CD14-positive monocyte (primary cell): ENCODE measurements at regions of chr11 and their contacts with region 1.

Region 1: DNA sequence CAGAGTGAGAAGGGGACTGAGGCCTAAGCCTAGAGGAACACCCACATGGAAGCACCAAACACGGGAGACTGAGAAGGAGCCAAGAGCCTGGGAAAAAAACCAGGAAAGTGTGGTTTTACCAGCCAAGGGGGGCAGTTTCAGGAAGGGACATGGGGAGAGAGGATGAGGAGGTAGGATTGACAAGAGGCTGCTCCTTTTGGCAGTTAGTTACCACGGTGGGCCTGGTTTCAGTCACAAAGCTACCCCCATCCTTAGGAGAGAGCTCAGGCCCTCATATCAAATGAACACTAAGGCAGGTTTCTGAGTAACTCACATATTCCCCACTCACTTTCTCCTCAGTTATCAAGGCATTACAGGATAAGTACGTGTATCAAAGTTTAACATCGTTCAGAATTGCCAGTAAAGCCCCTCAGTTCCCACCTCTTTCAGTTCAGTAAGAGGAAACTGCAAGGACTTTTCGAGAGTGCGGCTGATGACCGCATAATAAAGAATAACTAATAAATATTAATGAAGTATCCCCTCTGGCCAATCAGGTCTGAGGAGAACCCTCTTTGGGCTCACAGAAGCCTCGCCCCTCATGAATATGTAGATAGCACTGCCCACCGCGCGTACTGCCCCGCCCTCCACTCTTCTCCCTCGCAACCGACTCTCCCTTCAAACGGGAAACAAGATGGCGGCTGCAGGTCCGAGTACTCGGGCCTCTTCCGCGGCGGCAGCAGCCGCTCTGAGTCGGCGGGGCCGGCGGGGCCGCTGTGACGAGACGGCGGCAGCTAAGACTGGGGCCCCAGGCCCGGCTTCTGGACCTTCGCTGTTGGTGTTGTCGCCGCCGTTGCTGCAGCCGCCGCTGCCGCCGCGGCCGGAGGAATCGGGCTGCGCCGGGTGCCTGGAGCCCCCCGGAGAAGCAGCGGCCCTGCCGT is at the start of gene RNF169:
- DNase-seq: peak; percentile 94 to 98 (median 96)
- H3K4me3 ChIP-seq: peak within 1 kb of the TSS; percentile 50 to 81 (median 63)
- H3K4me3 Mint-ChIP-seq: peak within 1 kb of the TSS; percentile 86 to 96
- H3K27ac ChIP-seq: peak within 1 kb of the TSS; percentile 64 to 89
- H3K27ac Mint-ChIP-seq: peak within 1 kb of the TSS; percentile 82 to 93 (median 87)
- H3K4me1 ChIP-seq: peaks cover 26 to 36% of the 10 kb centered on the region in 2 donors
- H3K4me1 Mint-ChIP-seq: peaks cover 36% of the 10 kb centered on the region
- H3K27me3 ChIP-seq: no peaks in the 10 kb centered on the region
- H3K27me3 Mint-ChIP-seq: peaks cover 2 to 5% (median 2%) of the 10 kb centered on the region in 3 donors
- CTCF ChIP-seq: no peak
- polyA plus RNA-seq, gene RNF169: 1.4 to 16.2 (median 2.0) TPM

Region 2: GRCh38 chr11:74702383-74703007 is 46.0 kb before region 1 on chr11:
- intact Hi-C with region 1: no loop called
- DNase-seq: peak; percentile 34 to 47 (median 39)
- H3K4me3 ChIP-seq: no peak overlapping the region
- H3K4me3 Mint-ChIP-seq: no peak overlapping the region
- H3K27ac ChIP-seq: no peak overlapping the region
- H3K27ac Mint-ChIP-seq: no peak overlapping the region
- H3K4me1 ChIP-seq: no peaks in the 10 kb centered on the region
- H3K4me1 Mint-ChIP-seq: peaks cover 2% of the 10 kb centered on the region
- H3K27me3 ChIP-seq: no peaks in the 10 kb centered on the region
- H3K27me3 Mint-ChIP-seq: peaks cover 1 to 7% (median 2%) of the 10 kb centered on the region in 3 donors
- CTCF ChIP-seq: peak; percentile 97

Region 3: DNA sequence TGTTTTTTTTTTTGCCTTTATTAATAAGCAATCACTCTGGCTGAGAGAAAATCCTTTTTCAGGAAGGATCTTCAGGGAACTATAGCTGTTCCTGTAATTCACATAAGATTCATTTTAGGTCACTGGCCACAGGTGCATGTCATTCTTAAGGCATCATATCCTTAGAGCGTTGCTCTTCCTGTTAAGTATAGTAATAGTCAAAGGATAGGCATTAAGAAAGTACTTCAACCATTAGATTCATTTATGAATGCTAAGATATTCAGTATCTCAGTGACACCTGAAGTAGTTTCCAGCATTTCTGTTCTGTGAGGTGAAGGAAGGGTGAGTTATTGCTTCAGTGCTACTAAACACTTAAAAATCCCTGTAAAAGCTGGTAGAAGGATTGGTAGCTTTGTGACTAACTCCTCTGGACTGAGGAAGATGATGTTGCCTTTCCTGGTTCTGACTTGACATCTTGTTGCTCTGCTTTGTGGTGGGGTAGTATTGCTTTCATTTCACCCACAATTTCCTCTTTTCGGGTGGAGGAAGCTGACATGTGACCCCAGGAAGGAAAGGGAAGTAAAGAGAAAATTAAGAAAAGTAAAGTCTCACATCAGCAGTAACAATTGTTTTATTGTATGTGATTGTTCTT is 34.9 kb after region 1 on chr11:
- intact Hi-C with region 1: loop called (anchors 5 kb)
- DNase-seq: peak; percentile 88 to 96 (median 91)
- H3K4me3 ChIP-seq: peak overlapping the region in 2 of 3 experiments; percentile 19 to 48
- H3K4me3 Mint-ChIP-seq: peak overlapping the region; percentile 7 to 49
- H3K27ac ChIP-seq: peak overlapping the region in 1 of 2 donors; percentile 81
- H3K27ac Mint-ChIP-seq: peak overlapping the region in 6 of 7 donors; percentile 48 to 93 (median 90)
- H3K4me1 ChIP-seq: peaks cover 38 to 70% of the 10 kb centered on the region in 2 donors
- H3K4me1 Mint-ChIP-seq: peaks cover 38% of the 10 kb centered on the region
- H3K27me3 ChIP-seq: no peaks in the 10 kb centered on the region
- H3K27me3 Mint-ChIP-seq: no peaks in the 10 kb centered on the region
- CTCF ChIP-seq: no peak

Region 4: GRCh38 chr11:74806267-74806666 is 57.8 kb after region 1 on chr11:
- intact Hi-C with region 1: no loop called
- DNase-seq: no peak
- H3K4me3 ChIP-seq: no peak overlapping the region
- H3K4me3 Mint-ChIP-seq: no peak overlapping the region
- H3K27ac ChIP-seq: no peak overlapping the region
- H3K27ac Mint-ChIP-seq: no peak overlapping the region
- H3K4me1 ChIP-seq: no peaks in the 10 kb centered on the region
- H3K4me1 Mint-ChIP-seq: peaks cover 4% of the 10 kb centered on the region
- H3K27me3 ChIP-seq: no peaks in the 10 kb centered on the region
- H3K27me3 Mint-ChIP-seq: no peaks in the 10 kb centered on the region
- CTCF ChIP-seq: no peak